ENCODE measurements at regions of chr1 and their contacts with region 1.

Region 1: GRCh38 chr1:172286629-172287076 is 133.8 kb upstream of the C1orf105 start:
- DNase-seq: peak in 2 of 5 donors; percentile 20 to 42
- H3K4me3 ChIP-seq: no peak overlapping the region
- H3K27ac ChIP-seq: no peak overlapping the region
- H3K4me1 ChIP-seq: peaks cover 4% of the 10 kb centered on the region
- H3K27me3 ChIP-seq: no peaks in the 10 kb centered on the region
- CTCF ChIP-seq: no peak
- EP300 ChIP-seq: no peak
- POLR2A ChIP-seq: no peak

Region 2: GRCh38 chr1:172398970-172399755 is 112.5 kb after region 1 on chr1:
- intact Hi-C with region 1: loop called in 1 of 4 experiments (anchors 10 kb)
- DNase-seq: peak in 4 of 5 donors; percentile 47 to 78 (median 49)
- H3K4me3 ChIP-seq: peak overlapping the region; percentile 6
- H3K27ac ChIP-seq: peak overlapping the region in 1 of 2 donors; percentile 65
- H3K4me1 ChIP-seq: peaks cover 3% of the 10 kb centered on the region
- H3K27me3 ChIP-seq: no peaks in the 10 kb centered on the region
- CTCF ChIP-seq: peak; percentile 43 to 64 (median 60)
- EP300 ChIP-seq: no peak
- POLR2A ChIP-seq: no peak

Measured in ovary (tissue), 10 donors.